Activated naive CD4-positive, alpha-beta T cell treated with anti-CD3 and anti-CD28 coated beads for 36 hours (primary cell): ENCODE measurements at regions of chr17 and their contacts with region 1.

Region 1: GRCh38 chr17:47720754-47721533 is 12.1 kb upstream of the TBX21 start:
- DNase-seq: peak; percentile 100
- H3K4me3 Mint-ChIP-seq: peak overlapping the region; percentile 62
- H3K27ac Mint-ChIP-seq: peak overlapping the region; percentile 100
- H3K4me1 Mint-ChIP-seq: peaks cover 96% of the 10 kb centered on the region
- H3K27me3 Mint-ChIP-seq: no peaks in the 10 kb centered on the region

Region 2: GRCh38 chr17:47205419-47205963 is 515.5 kb before region 1 on chr17:
- CTCF ChIA-PET with region 1: no interaction called
- intact Hi-C with region 1: loop called (anchors 10 kb)
- DNase-seq: peak; percentile 78
- H3K4me3 Mint-ChIP-seq: peak overlapping the region; percentile 51
- H3K27ac Mint-ChIP-seq: peak overlapping the region; percentile 78
- H3K4me1 Mint-ChIP-seq: peaks cover 43% of the 10 kb centered on the region
- H3K27me3 Mint-ChIP-seq: no peaks in the 10 kb centered on the region

Region 3: DNA sequence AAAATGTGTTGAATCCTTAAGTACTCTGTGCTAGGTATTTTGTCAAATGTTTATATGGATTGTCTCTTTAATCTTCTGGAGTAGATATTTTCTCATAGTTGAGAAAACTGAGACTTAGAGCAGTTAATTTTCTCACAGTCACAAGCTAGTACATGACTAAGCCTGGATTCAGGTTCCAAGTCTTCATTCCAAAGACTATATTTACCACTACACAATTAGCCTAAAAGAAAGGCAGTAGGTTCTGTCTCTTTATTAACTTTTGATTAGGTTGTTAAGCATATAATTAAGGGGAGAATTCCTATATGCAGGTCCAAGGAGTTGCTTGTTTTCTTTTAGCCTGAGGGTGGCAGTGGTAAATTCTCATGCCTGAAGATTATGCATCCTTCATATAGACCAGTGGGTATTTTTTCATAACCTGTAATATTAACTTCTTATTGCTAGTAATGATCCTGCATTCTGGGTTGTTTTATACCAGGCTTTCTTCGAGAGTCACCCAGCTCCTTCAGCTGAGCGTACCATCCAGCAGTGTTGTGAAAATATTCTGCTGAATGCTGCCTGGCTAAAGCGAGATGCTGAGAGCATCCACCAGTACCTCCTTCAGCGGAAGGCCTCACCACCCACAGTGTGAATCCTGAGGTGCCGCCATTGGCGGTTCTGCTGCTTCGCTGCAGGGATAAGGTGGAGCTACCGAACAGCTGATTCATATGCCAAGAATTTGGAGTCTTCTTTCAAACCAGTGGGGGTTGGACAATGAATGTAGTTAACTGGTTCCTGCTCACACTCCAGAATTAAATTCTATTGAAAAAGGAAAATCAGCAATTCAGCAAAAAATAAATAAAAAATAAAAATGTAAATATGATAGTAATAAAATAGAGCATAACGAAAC is 99.4 kb before region 1 on chr17:
- CTCF ChIA-PET with region 1: no interaction called
- intact Hi-C with region 1: loop called (anchors 1 kb)
- DNase-seq: no peak
- H3K4me3 Mint-ChIP-seq: no peak overlapping the region
- H3K27ac Mint-ChIP-seq: peak overlapping the region; percentile 36
- H3K4me1 Mint-ChIP-seq: peaks cover 15% of the 10 kb centered on the region
- H3K27me3 Mint-ChIP-seq: no peaks in the 10 kb centered on the region

Region 4: GRCh38 chr17:47698749-47699535 is 22.0 kb before region 1 on chr17:
- CTCF ChIA-PET with region 1: interaction called, 128 read pairs
- intact Hi-C with region 1: loop called (anchors 1 kb)
- DNase-seq: peak; percentile 92
- H3K4me3 Mint-ChIP-seq: peak overlapping the region; percentile 28
- H3K27ac Mint-ChIP-seq: peak overlapping the region; percentile 64
- H3K4me1 Mint-ChIP-seq: peaks cover 79% of the 10 kb centered on the region
- H3K27me3 Mint-ChIP-seq: no peaks in the 10 kb centered on the region

Region 5: GRCh38 chr17:47707056-47707804 is 13.7 kb before region 1 on chr17:
- CTCF ChIA-PET with region 1: interaction called, 128 read pairs
- intact Hi-C with region 1: loop called (anchors 1 kb)
- DNase-seq: peak; percentile 5
- H3K4me3 Mint-ChIP-seq: no peak overlapping the region
- H3K27ac Mint-ChIP-seq: peak overlapping the region; percentile 98
- H3K4me1 Mint-ChIP-seq: peaks cover 69% of the 10 kb centered on the region
- H3K27me3 Mint-ChIP-seq: no peaks in the 10 kb centered on the region

Region 6: DNA sequence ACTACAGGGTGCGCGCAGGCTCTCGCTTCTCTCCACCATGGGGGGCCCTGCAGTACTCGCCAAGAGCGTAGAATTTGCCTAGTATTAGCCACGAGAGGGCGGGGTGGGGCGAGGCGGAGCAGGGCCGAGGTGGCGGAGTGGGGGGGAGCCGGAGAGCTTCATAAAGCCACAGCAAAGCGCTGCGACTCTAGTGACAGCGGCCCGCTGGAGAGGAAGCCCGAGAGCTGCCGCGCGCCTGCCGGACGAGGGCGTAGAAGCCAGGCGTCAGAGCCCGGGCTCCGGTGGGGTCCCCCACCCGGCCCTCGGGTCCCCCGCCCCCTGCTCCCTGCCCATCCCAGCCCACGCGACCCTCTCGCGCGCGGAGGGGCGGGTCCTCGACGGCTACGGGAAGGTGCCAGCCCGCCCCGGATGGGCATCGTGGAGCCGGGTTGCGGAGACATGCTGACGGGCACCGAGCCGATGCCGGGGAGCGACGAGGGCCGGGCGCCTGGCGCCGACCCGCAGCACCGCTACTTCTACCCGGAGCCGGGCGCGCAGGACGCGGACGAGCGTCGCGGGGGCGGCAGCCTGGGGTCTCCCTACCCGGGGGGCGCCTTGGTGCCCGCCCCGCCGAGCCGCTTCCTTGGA is 12.2 kb after region 1 on chr17 and contains the start of gene TBX21:
- CTCF ChIA-PET with region 1: interaction called, 37 read pairs
- intact Hi-C with region 1: loop called (anchors 1 kb)
- DNase-seq: peak; percentile 92
- H3K4me3 Mint-ChIP-seq: peak within 1 kb of the TSS; percentile 100
- H3K27ac Mint-ChIP-seq: peak within 1 kb of the TSS; percentile 99
- H3K4me1 Mint-ChIP-seq: peaks cover 70% of the 10 kb centered on the region
- H3K27me3 Mint-ChIP-seq: no peaks in the 10 kb centered on the region
- total RNA-seq, gene TBX21: 50.6 to 52.3 TPM